Ovary (tissue), 10 donors: ENCODE measurements at regions of chr15 and their contacts with region 1.

Region 1: DNA sequence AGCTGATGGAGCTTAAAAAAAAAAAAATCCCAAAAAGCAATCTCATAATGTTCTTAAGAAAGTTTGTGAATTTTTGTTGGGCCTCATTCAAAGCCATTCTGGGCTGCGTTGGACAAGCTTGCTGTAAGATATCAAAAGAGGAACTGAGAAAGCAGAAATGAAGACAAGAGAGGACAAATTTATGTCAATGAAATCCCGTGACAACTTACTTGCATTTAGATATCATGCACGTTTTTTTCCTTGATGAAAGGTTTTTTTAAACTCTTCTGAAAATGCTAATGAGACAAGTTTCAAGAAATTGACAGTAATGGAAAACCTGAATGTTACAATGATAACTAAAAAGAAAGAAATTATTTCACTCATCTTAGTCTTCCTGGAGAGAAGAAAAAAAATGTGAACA is 662.9 kb downstream of the SQOR start:
- DNase-seq: no peak
- H3K4me3 ChIP-seq: no peak overlapping the region
- H3K27ac ChIP-seq: no peak overlapping the region
- H3K4me1 ChIP-seq: no peaks in the 10 kb centered on the region
- H3K27me3 ChIP-seq: no peaks in the 10 kb centered on the region
- CTCF ChIP-seq: no peak
- EP300 ChIP-seq: no peak
- POLR2A ChIP-seq: no peak

Region 2: DNA sequence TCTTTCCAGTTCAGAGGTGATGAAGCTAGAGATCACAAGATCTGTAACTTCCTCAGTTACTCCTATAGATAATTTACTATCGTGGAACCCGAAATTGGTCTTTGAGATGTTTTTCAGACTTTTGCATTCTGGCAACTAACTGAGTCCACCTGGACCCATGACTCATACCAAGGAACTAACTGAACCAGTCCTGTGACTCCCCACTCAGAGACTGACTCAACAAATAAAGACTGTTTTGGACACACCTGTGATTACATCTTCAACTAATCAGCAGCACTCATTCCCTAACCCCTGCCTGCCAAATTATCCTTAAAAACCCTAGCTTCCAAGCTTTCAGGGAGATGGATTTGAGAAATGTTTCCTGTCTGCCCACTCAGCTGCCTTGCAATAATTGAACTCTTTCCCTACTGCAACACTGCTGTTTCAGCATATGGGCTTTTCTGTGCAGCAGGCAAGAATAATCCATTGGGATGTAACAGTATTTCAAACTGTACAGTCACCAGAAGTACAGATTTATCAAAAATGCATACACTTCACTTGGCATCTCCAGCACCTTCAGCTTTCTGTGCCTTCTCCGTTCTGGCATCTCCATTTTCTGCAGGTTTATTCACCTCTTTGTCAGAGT is 977.1 kb before region 1 on chr15:
- intact Hi-C with region 1: loop called in 1 of 4 experiments (anchors 10 kb)
- DNase-seq: no peak
- H3K4me3 ChIP-seq: no peak overlapping the region
- H3K27ac ChIP-seq: no peak overlapping the region
- H3K4me1 ChIP-seq: no peaks in the 10 kb centered on the region
- H3K27me3 ChIP-seq: no peaks in the 10 kb centered on the region
- CTCF ChIP-seq: no peak
- EP300 ChIP-seq: no peak
- POLR2A ChIP-seq: no peak